RWPE1 (cell line): ENCODE measurements at regions of chr12 and their contacts with region 1.

Region 1: GRCh38 chr12:123232807-123233543 is at the starts of genes MPHOSPH9 and MTRFR:
- DNase-seq: peak; percentile 100
- H3K27ac ChIP-seq: peak within 1 kb of the TSS; percentile 89
- CTCF ChIP-seq: no peak

Region 2: DNA sequence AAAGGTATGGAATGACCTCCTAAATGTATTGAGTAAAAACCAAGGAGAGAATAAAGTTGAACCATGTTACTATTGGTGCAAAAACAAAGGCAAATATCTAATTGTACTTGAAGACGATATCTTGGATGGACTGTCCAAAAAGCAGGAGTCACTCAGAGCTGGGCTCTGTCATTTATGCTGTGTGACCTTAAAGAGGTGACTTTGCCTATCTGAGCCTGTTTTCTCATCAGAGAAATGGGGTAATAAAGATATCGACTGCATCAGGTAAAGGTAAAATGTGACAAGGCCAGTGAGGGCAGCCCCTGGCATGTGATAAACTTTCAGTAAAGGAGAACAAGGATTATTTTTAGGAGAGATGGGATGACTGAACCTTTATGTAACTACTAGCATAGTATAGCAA is 264.9 kb before region 1 on chr12:
- CTCF ChIA-PET with region 1: no interaction called
- POLR2A ChIA-PET with region 1: interaction called, 10 read pairs
- DNase-seq: no peak
- H3K27ac ChIP-seq: no peak overlapping the region
- CTCF ChIP-seq: no peak

Region 3: GRCh38 chr12:123160801-123161487 is 72.0 kb before region 1 on chr12:
- CTCF ChIA-PET with region 1: interaction called, 10 read pairs
- POLR2A ChIA-PET with region 1: no interaction called
- DNase-seq: no peak
- H3K27ac ChIP-seq: no peak overlapping the region
- CTCF ChIP-seq: no peak

Region 4: GRCh38 chr12:123250484-123251383 is 17.8 kb after region 1 on chr12:
- CTCF ChIA-PET with region 1: interaction called, 10 read pairs
- POLR2A ChIA-PET with region 1: interaction called, 3 read pairs
- DNase-seq: peak; percentile 84
- H3K27ac ChIP-seq: peak overlapping the region; percentile 96
- CTCF ChIP-seq: no peak

Region 5: GRCh38 chr12:123278101-123278627 is 45.2 kb after region 1 on chr12:
- CTCF ChIA-PET with region 1: no interaction called
- POLR2A ChIA-PET with region 1: no interaction called
- DNase-seq: no peak
- H3K27ac ChIP-seq: no peak overlapping the region
- CTCF ChIP-seq: no peak